ENCODE measurements at regions of chr12 and their contacts with region 1.

Region 1: GRCh38 chr12:46617167-46617566 is 208.6 kb downstream of the SLC38A4 start:
- DNase-seq: no peak

Region 2: GRCh38 chr12:46546634-46547286 is 70.4 kb before region 1 on chr12:
- intact Hi-C with region 1: no loop called
- DNase-seq: no peak

Region 3: DNA sequence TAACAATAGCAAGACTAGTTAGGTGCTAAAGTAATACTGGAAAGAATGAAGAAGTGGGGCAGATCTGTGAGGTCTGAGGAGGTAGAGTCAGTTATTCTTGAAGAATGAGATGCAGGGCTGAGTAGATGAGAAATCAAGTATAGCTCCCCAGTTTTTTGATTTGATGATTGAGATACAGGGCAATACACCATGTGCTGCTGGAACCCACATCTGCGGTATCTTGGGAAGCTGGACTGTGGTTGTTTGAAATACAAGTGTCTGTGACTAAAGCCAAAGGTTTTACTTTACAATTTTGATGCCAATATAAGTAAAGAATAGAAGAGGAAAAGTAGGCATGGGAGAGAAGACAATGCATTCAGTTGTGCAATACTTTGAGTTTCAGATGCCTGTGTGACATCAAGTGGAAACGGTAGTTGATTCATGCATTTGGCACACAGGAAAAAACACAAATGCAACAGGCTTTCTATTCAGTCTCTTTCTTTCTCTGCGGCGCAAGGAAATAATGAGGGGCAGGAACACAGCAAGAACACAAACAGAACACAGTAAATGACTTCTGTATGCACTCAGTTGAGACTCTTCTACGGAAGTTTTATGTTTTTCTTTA is 54.4 kb before region 1 on chr12:
- intact Hi-C with region 1: loop called in 1 of 2 experiments (anchors 10 kb)
- DNase-seq: no peak